Activated T-helper 2 cell treated with anti-CD3 and anti-CD28 coated beads, Interferon-gamma antibody, Interleukin-2, Interleukin-4, amounts not matched to agents 10 μg/mL and 5 μg/mL and 100 μg/mL, durations not matched to agents 14 hours and 24 hours and 36 hours (primary cell): ENCODE measurements at regions of chr14 and their contacts with region 1.

Region 1: DNA sequence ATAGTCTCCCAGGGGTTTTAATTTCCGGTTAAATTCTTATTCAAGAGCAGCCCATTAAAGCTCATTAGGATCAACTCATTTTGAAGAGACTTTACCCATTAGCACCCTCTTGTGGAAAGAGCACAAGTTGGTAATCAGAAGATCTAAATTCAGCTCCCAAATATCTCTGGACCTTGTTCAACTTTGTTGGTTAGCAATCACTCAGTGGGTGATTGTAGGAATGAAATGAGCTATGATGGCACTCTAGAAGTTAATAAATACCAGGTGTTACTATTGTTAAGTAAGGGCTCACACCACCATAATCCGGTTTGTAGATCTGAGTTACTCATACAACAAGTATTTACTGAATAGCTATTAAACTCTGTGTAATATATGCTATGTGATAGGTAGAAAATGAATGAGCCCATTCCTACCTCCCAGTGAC is 42.9 kb downstream of the TRIP11 start:
- DNase-seq: no peak
- H3K4me3 Mint-ChIP-seq: no peak overlapping the region
- H3K27ac Mint-ChIP-seq: no peak overlapping the region
- H3K4me1 Mint-ChIP-seq: peaks cover 32% of the 10 kb centered on the region
- H3K27me3 Mint-ChIP-seq: no peaks in the 10 kb centered on the region

Region 2: GRCh38 chr14:91649930-91650329 is 347.0 kb before region 1 on chr14:
- intact Hi-C with region 1: loop called (anchors 5 kb)
- DNase-seq: no peak
- H3K4me3 Mint-ChIP-seq: no peak overlapping the region
- H3K27ac Mint-ChIP-seq: no peak overlapping the region
- H3K4me1 Mint-ChIP-seq: no peaks in the 10 kb centered on the region
- H3K27me3 Mint-ChIP-seq: no peaks in the 10 kb centered on the region

Region 3: DNA sequence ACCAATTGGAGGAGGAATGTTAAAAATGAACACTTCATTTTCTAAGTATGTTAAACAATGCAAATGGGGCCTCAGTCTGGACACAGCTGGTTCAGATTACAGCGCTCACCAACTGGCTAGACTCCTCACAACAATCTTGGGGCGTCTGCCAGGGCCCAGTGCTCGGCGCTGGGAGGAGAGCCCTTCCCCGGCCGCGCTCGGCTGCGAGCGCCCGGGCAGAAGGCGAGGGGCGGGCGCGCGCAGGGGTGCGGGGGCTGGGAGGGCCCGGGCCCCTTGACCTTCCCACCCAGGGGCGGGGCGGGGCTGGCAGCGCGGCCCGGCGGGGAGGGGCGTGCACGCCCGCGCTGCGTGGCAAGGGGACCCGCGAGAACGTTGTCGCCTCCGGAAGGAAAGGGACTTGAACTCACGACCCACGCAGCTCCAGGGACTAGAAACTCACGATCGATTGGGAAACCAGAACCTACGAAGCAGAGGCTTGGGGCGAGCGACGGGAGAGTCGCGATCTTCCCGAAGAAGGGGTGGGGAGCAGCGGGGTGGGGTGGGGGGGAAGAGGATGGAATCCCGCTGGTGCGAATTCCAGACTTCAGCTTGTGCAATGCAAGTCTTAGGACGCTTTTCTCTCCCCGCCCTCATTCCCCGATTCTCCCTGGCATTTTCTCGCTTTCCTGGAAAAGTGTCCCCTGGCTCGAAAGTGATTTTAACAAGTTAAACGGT is 49.3 kb before region 1 on chr14 and contains the start of gene FBLN5:
- intact Hi-C with region 1: loop called (anchors 5 kb)
- DNase-seq: no peak
- H3K4me3 Mint-ChIP-seq: peak within 1 kb of the TSS; percentile 86
- H3K27ac Mint-ChIP-seq: no peak within 1 kb of the TSS
- H3K4me1 Mint-ChIP-seq: peaks cover 9% of the 10 kb centered on the region
- H3K27me3 Mint-ChIP-seq: peaks cover 28% of the 10 kb centered on the region
- total RNA-seq, gene FBLN5: 6.2 and 6.4 TPM in 2 replicates

Region 4: DNA sequence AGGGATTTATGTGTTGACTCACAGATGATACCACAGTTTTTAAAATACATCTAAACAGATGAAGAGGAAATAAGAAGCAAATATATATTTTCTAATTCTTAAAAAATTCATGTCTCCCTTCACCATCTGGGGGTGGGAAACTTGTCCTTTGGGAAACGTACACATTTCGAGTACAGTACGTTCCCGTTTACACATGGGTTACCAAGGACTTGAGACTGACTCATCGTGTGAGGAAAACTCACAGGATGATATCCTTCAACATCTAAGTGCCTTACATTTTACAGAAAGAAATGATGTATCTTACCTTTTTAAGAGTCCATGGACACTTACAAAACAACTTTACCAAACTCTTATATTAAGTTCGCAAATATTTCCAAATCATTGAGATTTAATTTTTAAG is 33.5 kb before region 1 on chr14:
- intact Hi-C with region 1: no loop called
- DNase-seq: no peak
- H3K4me3 Mint-ChIP-seq: no peak overlapping the region
- H3K27ac Mint-ChIP-seq: no peak overlapping the region
- H3K4me1 Mint-ChIP-seq: peaks cover 24% of the 10 kb centered on the region
- H3K27me3 Mint-ChIP-seq: no peaks in the 10 kb centered on the region